ENCODE measurements at regions of chr2 and their contacts with region 1.

Region 1: DNA sequence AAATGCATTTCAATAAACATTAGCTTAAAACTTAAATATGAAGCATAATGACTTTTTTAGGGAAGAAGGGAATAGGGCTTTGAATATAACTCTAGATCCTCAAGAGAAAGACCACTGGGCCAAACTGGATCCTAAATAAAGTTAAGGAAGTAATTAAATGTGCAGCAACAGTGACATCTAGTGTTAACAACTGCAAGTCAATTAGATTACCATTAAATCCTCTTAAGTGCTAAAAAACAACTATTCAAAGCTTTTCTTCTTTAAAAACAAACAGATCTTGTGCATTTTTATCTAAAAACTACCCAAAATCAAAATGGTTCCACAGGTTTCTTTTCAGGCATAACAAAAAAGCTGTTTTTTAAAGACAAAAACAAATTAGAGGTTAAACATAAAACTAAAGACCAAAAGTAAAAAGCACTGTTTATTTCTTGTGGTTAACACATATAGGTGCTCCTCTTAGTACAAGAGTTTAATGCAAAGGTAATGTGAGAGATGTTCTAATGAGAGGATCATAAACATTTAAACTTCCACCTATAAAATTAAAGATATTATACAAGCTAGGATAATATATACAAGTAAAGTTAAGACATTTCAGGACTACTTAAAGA is 111.4 kb downstream of the THADA start:
- DNase-seq: no peak
- ATAC-seq: peak; percentile 49
- H3K4me3 Mint-ChIP-seq: no peak overlapping the region
- H3K27ac Mint-ChIP-seq: no peak overlapping the region
- H3K4me1 Mint-ChIP-seq: peaks cover 12% of the 10 kb centered on the region
- H3K27me3 Mint-ChIP-seq: no peaks in the 10 kb centered on the region

Region 2: DNA sequence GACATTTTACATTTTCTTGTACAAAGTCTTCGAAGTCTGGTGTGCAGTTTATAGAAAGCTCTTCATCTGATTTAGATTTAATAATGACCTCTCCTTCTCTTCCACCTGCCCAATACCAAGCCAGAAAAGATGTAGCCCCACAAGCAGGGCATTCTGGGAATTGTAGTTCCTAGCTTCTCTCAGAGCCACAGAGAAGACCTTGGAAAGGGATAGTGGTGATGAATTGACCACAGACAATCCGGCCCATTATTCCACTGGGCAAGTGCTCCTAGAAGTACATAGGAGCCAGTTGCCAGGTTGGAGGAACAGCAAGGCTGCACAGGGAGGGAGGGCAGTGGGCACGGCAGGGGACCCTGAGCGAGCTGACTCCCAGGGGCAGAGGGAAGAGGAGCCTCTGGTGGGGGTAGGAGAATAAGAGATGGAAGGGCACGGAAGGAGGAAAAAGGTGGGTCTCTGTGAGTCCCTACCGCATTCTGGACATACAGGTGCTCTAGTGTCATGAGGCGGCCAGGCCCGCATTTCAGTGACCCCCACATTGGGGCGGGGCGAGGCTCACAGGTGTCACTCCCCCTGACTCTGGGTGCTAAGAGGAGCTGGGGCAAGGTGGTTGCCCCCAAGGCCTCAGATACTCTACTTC is 539.5 kb before region 1 on chr2:
- CTCF ChIA-PET with region 1: interaction called, 36 read pairs
- POLR2A ChIA-PET with region 1: no interaction called
- DNase-seq: no peak
- ATAC-seq: no peak
- H3K4me3 Mint-ChIP-seq: no peak overlapping the region
- H3K27ac Mint-ChIP-seq: no peak overlapping the region
- H3K4me1 Mint-ChIP-seq: peaks cover 4% of the 10 kb centered on the region
- H3K27me3 Mint-ChIP-seq: peaks cover 2% of the 10 kb centered on the region

Region 3: DNA sequence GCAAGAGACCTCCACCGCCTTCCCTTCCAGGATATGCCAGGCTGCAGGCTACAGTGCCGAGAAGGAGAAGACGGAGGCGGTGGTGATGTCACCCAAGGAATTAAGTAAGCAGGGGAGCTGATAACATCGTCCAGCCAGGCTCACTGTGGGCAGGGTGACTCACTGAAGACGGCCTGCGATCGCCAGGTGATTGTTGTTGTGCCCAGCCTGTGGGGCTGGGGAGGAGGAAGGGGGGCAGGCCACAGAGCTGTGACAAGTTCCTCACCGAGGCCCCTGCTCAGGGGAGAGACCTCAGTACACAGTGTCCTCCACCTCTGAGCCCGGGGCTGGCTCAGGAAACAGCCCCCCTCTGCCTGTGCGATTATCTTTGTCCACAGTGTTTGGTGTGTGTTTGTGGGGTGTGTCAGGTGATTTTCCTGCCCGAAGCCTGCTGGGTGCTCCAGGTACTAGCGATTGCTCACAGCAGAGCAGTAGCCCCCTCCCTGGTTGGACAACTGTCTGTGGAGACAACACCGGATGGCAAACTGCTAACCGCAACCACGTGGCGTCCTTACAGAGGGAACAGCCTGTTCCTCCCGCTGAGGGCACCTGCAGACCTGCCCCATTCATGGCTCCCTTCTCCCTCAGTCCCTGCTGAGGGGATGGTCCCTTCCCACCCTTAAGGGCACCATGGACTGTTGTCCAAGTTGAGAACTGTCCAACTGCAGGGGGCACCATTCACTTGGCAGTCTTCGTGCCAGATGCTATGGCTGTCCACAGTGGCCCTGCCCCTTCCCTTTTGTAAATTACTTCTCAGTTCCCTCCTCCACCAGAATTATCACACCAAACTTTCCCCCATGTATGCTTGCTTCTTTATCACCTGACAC is 353.2 kb before region 1 on chr2:
- CTCF ChIA-PET with region 1: interaction called, 36 read pairs
- POLR2A ChIA-PET with region 1: no interaction called
- DNase-seq: peak; percentile 94
- ATAC-seq: peak; percentile 40
- H3K4me3 Mint-ChIP-seq: peak overlapping the region; percentile 59
- H3K27ac Mint-ChIP-seq: peak overlapping the region; percentile 100
- H3K4me1 Mint-ChIP-seq: peaks cover 91% of the 10 kb centered on the region
- H3K27me3 Mint-ChIP-seq: no peaks in the 10 kb centered on the region

Region 4: GRCh38 chr2:43246641-43247040 is 237.8 kb before region 1 on chr2:
- CTCF ChIA-PET with region 1: no interaction called
- POLR2A ChIA-PET with region 1: no interaction called
- DNase-seq: no peak
- ATAC-seq: no peak
- H3K4me3 Mint-ChIP-seq: no peak overlapping the region
- H3K27ac Mint-ChIP-seq: no peak overlapping the region
- H3K4me1 Mint-ChIP-seq: no peaks in the 10 kb centered on the region
- H3K27me3 Mint-ChIP-seq: no peaks in the 10 kb centered on the region

Region 5: GRCh38 chr2:43293744-43294695 is 190.4 kb before region 1 on chr2:
- CTCF ChIA-PET with region 1: interaction called, 10 read pairs
- POLR2A ChIA-PET with region 1: interaction called, 5 read pairs
- DNase-seq: peak; percentile 71
- ATAC-seq: peak; percentile 98
- H3K4me3 Mint-ChIP-seq: no peak overlapping the region
- H3K27ac Mint-ChIP-seq: peak overlapping the region; percentile 88
- H3K4me1 Mint-ChIP-seq: peaks cover 23% of the 10 kb centered on the region
- H3K27me3 Mint-ChIP-seq: no peaks in the 10 kb centered on the region

Region 6: GRCh38 chr2:43542285-43542937 is 58.0 kb after region 1 on chr2:
- CTCF ChIA-PET with region 1: interaction called, 34 read pairs
- POLR2A ChIA-PET with region 1: no interaction called
- DNase-seq: no peak
- ATAC-seq: peak; percentile 47
- H3K4me3 Mint-ChIP-seq: no peak overlapping the region
- H3K27ac Mint-ChIP-seq: no peak overlapping the region
- H3K4me1 Mint-ChIP-seq: peaks cover 10% of the 10 kb centered on the region
- H3K27me3 Mint-ChIP-seq: no peaks in the 10 kb centered on the region